Sigmoid colon (tissue), 7 donors: ENCODE measurements at regions of chr6 and their contacts with region 1.

Region 1: DNA sequence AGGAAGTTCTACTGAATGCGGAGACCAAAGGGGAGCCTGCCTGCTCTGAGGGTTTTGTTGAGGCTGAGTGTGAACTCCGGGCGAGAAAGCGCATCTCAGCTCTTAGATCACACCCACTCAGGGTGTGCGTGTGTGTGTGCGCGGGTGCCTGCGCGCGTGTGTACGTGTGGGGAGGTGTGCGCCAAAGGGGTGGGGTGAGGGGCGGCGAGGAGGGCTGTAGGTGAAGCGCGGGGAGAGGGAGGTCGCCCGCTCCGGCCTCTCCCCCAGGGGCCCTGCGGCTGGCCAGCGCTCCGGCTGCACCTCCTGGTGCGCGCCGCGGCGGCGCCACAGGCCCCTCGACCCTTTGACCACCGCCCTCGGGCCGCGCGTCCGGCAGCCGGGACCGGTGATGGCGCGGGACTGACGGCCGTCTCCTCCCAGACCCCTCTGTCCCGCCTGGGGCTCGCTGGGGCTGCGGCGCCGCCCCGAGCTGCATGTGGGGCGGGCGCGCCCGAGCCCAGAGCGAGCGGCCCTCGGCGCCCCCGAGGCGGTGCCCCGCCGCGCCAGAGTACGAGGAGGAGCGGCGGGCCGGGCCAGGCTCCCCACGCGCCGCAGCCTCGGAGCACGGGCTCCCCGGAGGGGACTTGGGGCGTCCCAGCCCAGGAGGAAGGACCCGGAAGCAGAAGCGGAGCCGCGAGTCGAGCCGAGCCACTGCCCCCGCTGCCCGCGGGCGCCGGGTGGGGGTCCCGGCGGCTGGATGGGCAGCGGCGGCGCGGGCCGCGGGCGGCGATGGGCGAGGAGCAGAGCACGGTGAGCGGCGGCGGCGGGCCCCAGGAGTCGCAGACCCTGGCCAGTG is at the start of gene RNF217:
- DNase-seq: peak; percentile 90
- H3K4me3 ChIP-seq: peak within 1 kb of the TSS; percentile 88 to 92 (median 89)
- H3K27ac ChIP-seq: peak within 1 kb of the TSS; percentile 95 to 99 (median 98)
- H3K4me1 ChIP-seq: peaks cover 0 to 42% (median 35%) of the 10 kb centered on the region in 4 donors
- H3K27me3 ChIP-seq: no peaks in the 10 kb centered on the region
- CTCF ChIP-seq: no peak
- EP300 ChIP-seq: peak in 1 of 4 donors; percentile 6
- POLR2A ChIP-seq: peak in 1 of 2 donors; percentile 40
- total RNA-seq, gene RNF217: 35.7 to 55.9 (median 49.2) TPM

Region 2: GRCh38 chr6:124927806-124928205 is 34.2 kb before region 1 on chr6:
- intact Hi-C with region 1: loop called (anchors 5 kb)
- DNase-seq: no peak
- H3K4me3 ChIP-seq: no peak overlapping the region
- H3K27ac ChIP-seq: peak overlapping the region in 1 of 4 donors; percentile 25
- H3K4me1 ChIP-seq: peaks cover 0 to 17% (median 16%) of the 10 kb centered on the region in 4 donors
- H3K27me3 ChIP-seq: no peaks in the 10 kb centered on the region
- CTCF ChIP-seq: no peak
- EP300 ChIP-seq: no peak
- POLR2A ChIP-seq: no peak

Region 3: GRCh38 chr6:125001684-125002405 is 39.9 kb after region 1 on chr6:
- intact Hi-C with region 1: no loop called
- DNase-seq: no peak
- H3K4me3 ChIP-seq: peak overlapping the region in 2 of 4 donors; percentile 7
- H3K27ac ChIP-seq: peak overlapping the region in 3 of 4 donors; percentile 12 to 63 (median 50)
- H3K4me1 ChIP-seq: peaks cover 0 to 45% (median 30%) of the 10 kb centered on the region in 4 donors
- H3K27me3 ChIP-seq: no peaks in the 10 kb centered on the region
- CTCF ChIP-seq: no peak
- EP300 ChIP-seq: no peak
- POLR2A ChIP-seq: no peak

Region 4: DNA sequence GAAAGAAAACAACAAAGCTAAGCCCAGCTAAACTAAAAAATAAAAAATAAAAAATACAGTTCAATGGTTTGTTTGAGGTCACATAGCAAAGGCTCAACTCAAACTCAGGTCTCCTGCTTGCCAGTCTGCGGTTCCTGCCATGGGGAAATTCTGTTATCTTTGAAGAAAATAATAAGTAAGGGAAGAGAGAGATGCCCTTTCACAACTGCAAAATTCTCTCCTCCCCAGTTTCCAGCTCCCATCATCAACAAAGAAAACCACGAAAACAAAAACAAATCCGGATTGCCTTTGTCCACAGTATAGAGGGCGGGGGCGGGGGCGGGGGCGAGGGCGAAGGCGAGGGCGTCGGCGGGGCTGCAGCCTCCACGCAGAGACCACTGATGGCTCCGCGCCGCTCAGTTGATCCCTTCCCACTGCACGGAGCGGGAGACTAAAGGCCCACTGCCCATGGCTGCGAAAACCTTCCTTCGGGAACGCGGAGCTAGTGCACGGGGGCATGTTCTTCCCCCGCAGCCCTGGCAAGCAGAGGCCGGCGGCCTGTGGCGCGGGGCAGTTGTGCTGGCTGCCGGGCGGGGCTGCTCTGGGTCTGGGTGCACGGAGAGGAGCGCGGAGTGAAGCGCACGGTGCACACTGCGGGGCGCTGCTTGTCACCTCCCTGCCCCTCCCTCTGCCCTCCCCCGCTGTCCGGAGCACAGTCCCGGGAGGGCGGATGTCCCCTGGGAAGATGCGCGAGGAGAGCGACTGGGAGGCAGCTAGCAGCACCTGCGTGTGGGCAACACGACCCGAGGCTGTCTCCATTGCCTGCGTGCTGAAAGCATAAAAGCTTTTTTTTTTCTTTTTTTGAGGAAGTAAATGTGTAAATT is 137.4 kb after region 1 on chr6:
- intact Hi-C with region 1: loop called (anchors 2 kb)
- DNase-seq: peak; percentile 87
- H3K4me3 ChIP-seq: peak overlapping the region; percentile 41 to 57 (median 56)
- H3K27ac ChIP-seq: peak overlapping the region in 3 of 4 donors; percentile 76 to 81 (median 79)
- H3K4me1 ChIP-seq: peaks cover 0 to 75% (median 63%) of the 10 kb centered on the region in 4 donors
- H3K27me3 ChIP-seq: no peaks in the 10 kb centered on the region
- CTCF ChIP-seq: no peak
- EP300 ChIP-seq: no peak
- POLR2A ChIP-seq: no peak

Region 5: DNA sequence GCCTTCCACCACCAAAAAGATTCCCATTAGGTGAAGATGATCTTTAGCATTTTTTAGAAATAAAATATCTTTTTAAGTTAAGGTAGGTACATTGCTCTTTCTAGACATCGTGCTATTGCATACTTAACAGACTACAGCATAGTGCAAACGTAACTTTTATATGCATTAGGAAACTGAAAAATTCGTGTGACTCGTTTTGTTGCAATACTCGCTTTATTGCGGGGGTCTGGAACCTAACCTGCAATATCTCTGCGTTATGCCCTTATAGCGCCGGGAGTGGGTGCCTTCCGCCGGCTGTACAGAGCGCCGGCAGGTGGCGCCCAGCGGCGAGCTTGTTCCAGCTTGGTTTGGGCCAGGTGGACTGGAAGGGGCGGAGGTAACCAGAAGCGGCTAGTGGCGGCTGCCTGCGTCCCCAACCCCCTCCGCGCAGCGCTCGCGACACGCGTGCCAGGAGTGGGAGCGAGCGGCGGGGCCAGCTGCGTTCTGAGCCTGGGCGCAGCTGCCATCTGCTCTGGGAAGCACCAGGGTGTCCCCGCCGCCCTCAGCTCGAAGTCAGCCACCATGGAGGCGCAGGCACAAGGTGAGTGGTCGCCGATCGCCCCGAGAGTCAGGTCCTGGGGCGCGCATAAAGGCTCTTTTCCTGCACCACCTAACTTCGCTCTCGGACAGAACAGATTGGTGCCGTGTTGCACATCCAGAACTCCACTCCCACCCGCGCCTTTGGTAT is 191.6 kb after region 1 on chr6 and contains the start of gene TPD52L1:
- intact Hi-C with region 1: loop called (anchors 5 kb)
- DNase-seq: peak; percentile 87
- H3K4me3 ChIP-seq: peak within 1 kb of the TSS; percentile 56 to 71 (median 64)
- H3K27ac ChIP-seq: peak within 1 kb of the TSS; percentile 67 to 90 (median 90)
- H3K4me1 ChIP-seq: peaks cover 0 to 49% (median 24%) of the 10 kb centered on the region in 4 donors
- H3K27me3 ChIP-seq: no peaks in the 10 kb centered on the region
- CTCF ChIP-seq: peak; percentile 53 to 85 (median 60)
- EP300 ChIP-seq: no peak
- POLR2A ChIP-seq: no peak
- total RNA-seq, gene TPD52L1: 61.0 to 98.9 (median 73.8) TPM

Region 6: DNA sequence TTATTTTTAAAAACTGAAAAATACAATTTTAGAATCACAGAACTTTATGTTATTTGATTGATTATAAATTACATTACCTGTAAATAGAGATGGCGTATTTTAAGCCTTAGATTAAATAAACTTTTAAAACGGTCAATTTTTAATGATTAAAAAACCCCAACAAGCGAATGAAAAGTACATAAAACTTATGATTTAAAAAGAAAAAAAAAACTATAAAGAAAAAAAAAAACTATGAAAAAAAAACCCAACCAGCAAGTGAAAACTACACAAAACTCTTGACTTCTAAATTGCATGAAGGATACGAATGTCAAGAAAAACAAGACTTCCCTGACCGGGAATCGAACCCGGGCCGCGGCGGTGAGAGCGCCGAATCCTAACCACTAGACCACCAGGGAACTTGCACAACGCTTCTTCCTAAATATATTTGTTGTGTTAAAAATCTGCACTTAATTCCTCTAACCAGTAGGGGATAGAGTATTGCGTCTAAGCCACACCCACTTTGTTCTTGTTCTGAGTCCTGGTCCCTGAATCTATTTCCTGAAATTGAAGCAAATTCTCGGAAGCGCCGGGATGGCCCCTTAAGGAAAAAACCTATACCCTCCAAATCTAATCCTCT is 818.0 kb after region 1 on chr6:
- intact Hi-C with region 1: loop called (anchors 10 kb)
- DNase-seq: peak; percentile 90
- H3K4me3 ChIP-seq: peak overlapping the region; percentile 38 to 65 (median 56)
- H3K27ac ChIP-seq: peak overlapping the region; percentile 82 to 94 (median 88)
- H3K4me1 ChIP-seq: peaks cover 0 to 11% (median 5%) of the 10 kb centered on the region in 4 donors
- H3K27me3 ChIP-seq: no peaks in the 10 kb centered on the region
- CTCF ChIP-seq: peak; percentile 37 to 51 (median 42)
- EP300 ChIP-seq: no peak
- POLR2A ChIP-seq: no peak